Activated CD4-positive, alpha-beta T cell treated with anti-CD3 and anti-CD28 coated beads, Interleukin-2, amount 10 ng/mL, durations not matched to agents 24 days and 14 days (primary cell): ENCODE measurements at regions of chr5 and their contacts with region 1.

Region 1: GRCh38 chr5:68272289-68272688 is 56.7 kb downstream of the PIK3R1 start:
- DNase-seq: no peak
- H3K4me3 Mint-ChIP-seq: no peak overlapping the region
- H3K27ac Mint-ChIP-seq: no peak overlapping the region
- H3K4me1 Mint-ChIP-seq: peaks cover 57% of the 10 kb centered on the region
- H3K27me3 Mint-ChIP-seq: no peaks in the 10 kb centered on the region

Region 2: GRCh38 chr5:67246108-67246507 is 1026.2 kb before region 1 on chr5:
- intact Hi-C with region 1: loop called (anchors 5 kb)
- DNase-seq: peak; percentile 77
- H3K4me3 Mint-ChIP-seq: no peak overlapping the region
- H3K27ac Mint-ChIP-seq: no peak overlapping the region
- H3K4me1 Mint-ChIP-seq: peaks cover 7% of the 10 kb centered on the region
- H3K27me3 Mint-ChIP-seq: no peaks in the 10 kb centered on the region

Region 3: GRCh38 chr5:68252673-68253623 is 19.3 kb before region 1 on chr5:
- intact Hi-C with region 1: loop called (anchors 2 kb)
- DNase-seq: peak; percentile 81
- H3K4me3 Mint-ChIP-seq: no peak overlapping the region
- H3K27ac Mint-ChIP-seq: no peak overlapping the region
- H3K4me1 Mint-ChIP-seq: peaks cover 61% of the 10 kb centered on the region
- H3K27me3 Mint-ChIP-seq: no peaks in the 10 kb centered on the region

Region 4: GRCh38 chr5:68260467-68260866 is 11.8 kb before region 1 on chr5:
- intact Hi-C with region 1: loop called (anchors 1 kb)
- DNase-seq: no peak
- H3K4me3 Mint-ChIP-seq: no peak overlapping the region
- H3K27ac Mint-ChIP-seq: no peak overlapping the region
- H3K4me1 Mint-ChIP-seq: peaks cover 53% of the 10 kb centered on the region
- H3K27me3 Mint-ChIP-seq: no peaks in the 10 kb centered on the region

Region 5: GRCh38 chr5:68433923-68434879 is 161.9 kb after region 1 on chr5:
- intact Hi-C with region 1: loop called (anchors 1 kb)
- DNase-seq: peak; percentile 96
- H3K4me3 Mint-ChIP-seq: peak overlapping the region; percentile 66
- H3K27ac Mint-ChIP-seq: peak overlapping the region; percentile 84
- H3K4me1 Mint-ChIP-seq: peaks cover 54% of the 10 kb centered on the region
- H3K27me3 Mint-ChIP-seq: peaks cover 37% of the 10 kb centered on the region

Region 6: DNA sequence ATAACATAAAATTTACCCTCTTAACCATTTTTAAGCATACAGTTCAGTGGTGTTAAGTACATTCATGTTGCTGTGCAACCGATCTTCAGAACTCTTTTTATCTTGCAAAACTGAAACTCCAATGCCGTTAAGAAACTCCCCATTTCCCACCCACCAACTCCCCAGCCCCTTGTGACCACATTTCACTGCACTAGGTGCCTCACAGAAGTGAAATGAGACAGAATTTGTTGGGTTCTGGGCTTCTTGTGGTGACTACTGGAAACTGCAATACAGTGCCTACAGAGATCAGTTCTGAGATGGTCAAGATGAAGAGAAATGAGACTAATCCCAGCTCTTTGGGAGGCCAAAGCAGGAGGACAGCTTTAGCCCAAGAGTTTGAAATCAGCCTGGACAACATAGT is 619.4 kb after region 1 on chr5:
- intact Hi-C with region 1: loop called (anchors 5 kb)
- DNase-seq: peak; percentile 82
- H3K4me3 Mint-ChIP-seq: no peak overlapping the region
- H3K27ac Mint-ChIP-seq: peak overlapping the region; percentile 48
- H3K4me1 Mint-ChIP-seq: peaks cover 23% of the 10 kb centered on the region
- H3K27me3 Mint-ChIP-seq: no peaks in the 10 kb centered on the region